GM10248 (cell line): ENCODE measurements at regions of chr7 and their contacts with region 1.

Region 1: GRCh38 chr7:22782616-22783232 is 39.9 kb downstream of the TOMM7 start:
- DNase-seq: peak; percentile 84
- CTCF ChIP-seq: peak; percentile 87

Region 2: DNA sequence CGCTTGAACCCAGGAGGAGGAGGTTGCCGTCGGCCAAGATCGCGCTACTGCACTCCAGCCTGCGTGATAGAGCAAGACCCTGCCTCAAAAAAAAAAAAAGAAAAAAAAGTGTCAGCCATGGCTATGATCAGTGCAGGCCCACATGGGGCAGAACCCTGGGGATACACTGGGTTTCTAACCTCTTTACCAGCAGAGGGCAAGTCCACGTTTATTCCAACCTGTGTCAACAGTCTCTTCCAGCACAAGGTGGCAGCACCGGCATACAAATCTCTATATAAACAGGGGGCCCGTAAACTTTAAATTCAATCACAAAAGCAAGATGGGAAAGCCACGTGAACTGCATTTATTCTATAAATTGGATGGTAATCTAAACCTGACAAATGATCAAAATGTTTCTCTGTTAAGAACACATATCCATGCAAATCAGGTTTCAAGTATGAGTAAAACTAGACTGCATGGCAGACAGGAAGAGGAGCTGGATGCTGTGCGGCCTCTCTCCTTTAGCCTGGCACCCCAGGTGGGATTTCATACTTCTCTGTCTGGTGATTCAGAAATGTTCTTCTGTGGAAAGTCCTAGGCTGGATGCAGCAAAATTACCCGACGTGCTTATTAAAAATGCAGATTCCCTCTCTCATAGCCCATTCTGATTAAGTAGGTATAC is 222.8 kb before region 1 on chr7:
- CTCF ChIA-PET with region 1: interaction called, 92 read pairs
- POLR2A ChIA-PET with region 1: no interaction called
- DNase-seq: peak; percentile 72
- CTCF ChIP-seq: peak; percentile 80

Region 3: GRCh38 chr7:22672846-22673652 is 109.7 kb before region 1 on chr7:
- CTCF ChIA-PET with region 1: no interaction called
- POLR2A ChIA-PET with region 1: no interaction called
- DNase-seq: no peak
- CTCF ChIP-seq: no peak

Region 4: DNA sequence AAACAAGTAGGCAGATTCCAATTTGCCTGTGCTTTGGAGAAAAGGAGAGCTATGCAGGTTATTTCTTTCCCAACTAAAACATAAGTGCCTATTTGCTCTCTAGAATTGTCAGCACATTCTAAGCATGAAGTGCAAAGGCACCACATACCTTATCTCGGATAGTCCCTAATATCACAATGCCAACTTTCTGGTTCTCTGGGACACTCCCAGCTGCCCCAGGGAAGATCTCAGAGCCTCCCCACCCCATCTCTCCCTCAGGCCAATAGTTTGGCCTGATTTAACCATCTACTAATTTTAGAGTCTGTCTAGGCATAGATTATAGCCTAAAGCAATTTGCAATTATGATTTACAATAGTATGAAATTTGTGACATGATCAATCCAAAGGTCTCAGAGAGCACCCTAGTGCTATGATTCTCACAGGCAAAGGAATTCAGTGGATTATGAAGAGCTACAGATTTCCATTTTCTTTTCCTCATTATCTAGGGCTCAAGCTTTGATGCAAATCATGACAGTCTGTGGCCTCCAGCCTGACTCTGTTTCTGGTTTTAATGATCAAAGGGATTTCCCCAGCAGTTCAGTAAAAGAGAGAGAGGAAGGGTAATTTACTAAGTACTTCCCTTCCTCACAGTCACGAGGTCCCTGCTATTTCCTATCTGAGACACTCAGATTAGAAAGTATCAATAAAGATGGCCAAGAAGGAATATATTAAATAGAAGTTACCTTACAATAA is 84.7 kb before region 1 on chr7:
- CTCF ChIA-PET with region 1: interaction called, 10 read pairs
- POLR2A ChIA-PET with region 1: no interaction called
- DNase-seq: peak; percentile 52
- CTCF ChIP-seq: no peak

Region 5: DNA sequence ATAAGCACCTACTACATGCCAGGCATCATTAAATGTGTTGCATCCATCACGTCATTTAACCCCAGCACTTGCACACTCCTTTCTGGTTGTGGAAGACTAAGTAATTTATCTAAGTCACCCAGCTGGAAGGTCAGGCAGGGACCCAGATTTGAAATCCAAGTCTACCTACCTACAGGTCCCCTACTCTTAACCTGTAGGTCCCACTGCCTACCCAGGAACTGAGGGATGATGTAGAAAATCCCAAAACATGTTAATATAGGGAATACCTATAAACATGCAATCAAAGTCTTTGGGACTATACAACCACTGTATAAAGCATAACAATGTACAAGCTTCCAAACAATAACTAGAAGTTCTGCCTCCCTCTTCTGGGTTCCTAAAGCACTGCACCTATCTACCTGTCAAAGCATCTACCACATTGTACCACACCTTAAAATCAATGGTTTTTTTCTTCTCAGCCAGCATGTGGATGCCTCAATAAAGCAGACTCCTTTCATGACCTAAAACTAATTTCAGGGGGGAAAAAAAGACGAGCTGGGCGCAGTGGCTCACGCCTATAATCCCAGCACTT is 50.1 kb before region 1 on chr7:
- CTCF ChIA-PET with region 1: interaction called, 15 read pairs
- POLR2A ChIA-PET with region 1: no interaction called
- DNase-seq: no peak
- CTCF ChIP-seq: no peak

Region 6: DNA sequence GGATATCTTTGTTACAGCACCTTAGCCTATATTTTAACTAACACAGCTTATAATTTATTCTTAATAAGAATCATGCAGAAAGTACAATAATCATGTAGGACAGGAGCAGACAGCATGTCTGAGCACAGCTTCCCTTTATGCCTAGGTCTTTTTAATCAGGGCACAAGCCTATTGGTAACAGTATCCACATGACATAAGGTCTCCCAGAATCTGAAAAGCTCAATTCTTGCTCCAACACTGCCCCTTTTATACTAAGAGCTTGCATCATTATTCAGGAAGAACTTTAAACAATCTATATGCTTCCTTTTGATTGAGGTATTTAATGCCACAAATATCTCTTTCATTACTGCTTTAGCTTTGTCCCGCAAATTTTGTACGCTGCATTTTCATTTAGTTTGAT is 24.1 kb before region 1 on chr7:
- CTCF ChIA-PET with region 1: interaction called, 23 read pairs
- POLR2A ChIA-PET with region 1: no interaction called
- DNase-seq: no peak
- CTCF ChIP-seq: no peak

Region 7: GRCh38 chr7:22771194-22771871 is 11.4 kb before region 1 on chr7:
- CTCF ChIA-PET with region 1: interaction called, 15 read pairs
- POLR2A ChIA-PET with region 1: no interaction called
- DNase-seq: no peak
- CTCF ChIP-seq: no peak